ENCODE measurements at regions of chr7 and their contacts with region 1.

Region 1: GRCh38 chr7:33982425-33982786 is 77.1 kb downstream of the BMPER start:
- DNase-seq: no peak
- ATAC-seq: peak; percentile 48
- H3K4me3 Mint-ChIP-seq: no peak overlapping the region
- H3K27ac Mint-ChIP-seq: no peak overlapping the region
- H3K4me1 Mint-ChIP-seq: peaks cover 13% of the 10 kb centered on the region
- H3K27me3 Mint-ChIP-seq: no peaks in the 10 kb centered on the region
- CTCF ChIP-seq: peak; percentile 42

Region 2: GRCh38 chr7:33952824-33953223 is 29.6 kb before region 1 on chr7:
- CTCF ChIA-PET with region 1: interaction called, 10 read pairs
- POLR2A ChIA-PET with region 1: no interaction called
- DNase-seq: no peak
- ATAC-seq: no peak
- H3K4me3 Mint-ChIP-seq: no peak overlapping the region
- H3K27ac Mint-ChIP-seq: no peak overlapping the region
- H3K4me1 Mint-ChIP-seq: peaks cover 8% of the 10 kb centered on the region
- H3K27me3 Mint-ChIP-seq: no peaks in the 10 kb centered on the region
- CTCF ChIP-seq: no peak

Region 3: DNA sequence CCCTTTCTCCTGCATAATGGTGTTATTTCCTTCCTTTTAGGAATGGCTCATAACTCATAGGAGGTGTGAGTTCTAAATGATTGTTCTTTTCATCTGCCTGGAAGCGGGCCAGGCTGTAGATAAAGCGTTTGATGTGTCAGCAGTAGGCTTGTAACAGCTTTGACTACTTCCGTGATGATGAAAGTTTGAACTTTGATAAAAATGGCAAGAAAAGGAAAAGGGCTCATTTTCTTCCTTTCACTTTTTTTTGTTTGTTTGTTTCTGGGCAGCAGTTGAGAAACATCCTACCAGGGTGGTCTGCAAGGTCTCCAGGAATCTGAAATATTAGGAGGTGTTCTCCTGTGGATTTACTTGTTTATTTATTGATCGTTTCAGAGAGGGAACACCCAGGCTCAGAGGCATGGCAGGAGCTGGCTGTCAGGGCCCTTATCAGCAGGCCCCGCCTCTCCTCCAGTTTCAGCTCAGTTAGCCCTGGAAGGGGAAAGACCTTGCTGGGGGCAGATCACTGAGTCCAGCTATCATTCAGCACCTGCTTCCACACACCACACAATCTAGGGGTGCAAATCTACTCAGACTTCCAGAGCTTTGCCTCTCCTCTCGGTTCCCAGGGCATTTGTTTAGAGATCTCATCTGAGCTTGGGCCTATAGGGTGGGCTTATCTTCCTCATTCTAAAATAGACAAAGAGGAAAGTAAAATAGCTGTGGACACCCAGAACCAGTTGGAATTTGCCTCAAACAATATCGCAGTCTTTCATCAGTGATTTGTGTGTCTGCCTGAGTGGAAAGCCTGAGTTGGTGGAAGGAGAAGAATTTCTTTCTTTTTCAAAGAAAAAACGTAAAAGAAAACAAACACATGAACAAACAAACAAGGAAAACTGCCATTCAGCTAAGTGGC is 53.9 kb after region 1 on chr7:
- CTCF ChIA-PET with region 1: interaction called, 10 read pairs
- POLR2A ChIA-PET with region 1: no interaction called
- DNase-seq: peak; percentile 23
- ATAC-seq: peak; percentile 84
- H3K4me3 Mint-ChIP-seq: no peak overlapping the region
- H3K27ac Mint-ChIP-seq: 0 out of 2 replicates have a peak overlapping the region, but pooled peaks have one; percentile 18
- H3K4me1 Mint-ChIP-seq: peaks cover 25% of the 10 kb centered on the region
- H3K27me3 Mint-ChIP-seq: no peaks in the 10 kb centered on the region
- CTCF ChIP-seq: no peak

Region 4: GRCh38 chr7:34066968-34067367 is 84.6 kb after region 1 on chr7:
- CTCF ChIA-PET with region 1: interaction called, 10 read pairs
- POLR2A ChIA-PET with region 1: no interaction called
- DNase-seq: no peak
- ATAC-seq: peak; percentile 75
- H3K4me3 Mint-ChIP-seq: no peak overlapping the region
- H3K27ac Mint-ChIP-seq: peak overlapping the region; percentile 57; the same call in 1 of the 2 replicates
- H3K4me1 Mint-ChIP-seq: peaks cover 55% of the 10 kb centered on the region
- H3K27me3 Mint-ChIP-seq: no peaks in the 10 kb centered on the region
- CTCF ChIP-seq: no peak

Region 5: DNA sequence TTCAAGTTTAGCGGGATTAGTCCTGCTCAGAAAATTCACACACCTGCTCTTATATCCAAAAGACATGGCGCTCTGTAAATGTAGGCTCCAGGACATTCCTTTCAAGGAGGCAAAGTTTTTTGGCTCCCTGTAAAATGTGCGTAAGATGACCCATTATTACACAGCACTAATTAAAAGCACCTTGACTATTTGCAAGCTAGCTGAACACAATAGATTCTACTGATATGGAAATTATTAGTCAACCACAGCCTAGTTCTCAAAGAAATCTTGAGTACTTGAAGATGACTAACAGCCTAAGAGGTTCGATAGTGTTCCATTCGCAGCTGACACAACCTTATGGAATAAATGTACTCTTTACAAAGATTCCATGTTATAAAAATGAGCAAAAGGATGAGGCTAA is 98.1 kb after region 1 on chr7:
- CTCF ChIA-PET with region 1: interaction called, 231 read pairs
- POLR2A ChIA-PET with region 1: no interaction called
- DNase-seq: no peak
- ATAC-seq: no peak
- H3K4me3 Mint-ChIP-seq: no peak overlapping the region
- H3K27ac Mint-ChIP-seq: no peak overlapping the region
- H3K4me1 Mint-ChIP-seq: peaks cover 19% of the 10 kb centered on the region
- H3K27me3 Mint-ChIP-seq: no peaks in the 10 kb centered on the region
- CTCF ChIP-seq: no peak

Region 6: DNA sequence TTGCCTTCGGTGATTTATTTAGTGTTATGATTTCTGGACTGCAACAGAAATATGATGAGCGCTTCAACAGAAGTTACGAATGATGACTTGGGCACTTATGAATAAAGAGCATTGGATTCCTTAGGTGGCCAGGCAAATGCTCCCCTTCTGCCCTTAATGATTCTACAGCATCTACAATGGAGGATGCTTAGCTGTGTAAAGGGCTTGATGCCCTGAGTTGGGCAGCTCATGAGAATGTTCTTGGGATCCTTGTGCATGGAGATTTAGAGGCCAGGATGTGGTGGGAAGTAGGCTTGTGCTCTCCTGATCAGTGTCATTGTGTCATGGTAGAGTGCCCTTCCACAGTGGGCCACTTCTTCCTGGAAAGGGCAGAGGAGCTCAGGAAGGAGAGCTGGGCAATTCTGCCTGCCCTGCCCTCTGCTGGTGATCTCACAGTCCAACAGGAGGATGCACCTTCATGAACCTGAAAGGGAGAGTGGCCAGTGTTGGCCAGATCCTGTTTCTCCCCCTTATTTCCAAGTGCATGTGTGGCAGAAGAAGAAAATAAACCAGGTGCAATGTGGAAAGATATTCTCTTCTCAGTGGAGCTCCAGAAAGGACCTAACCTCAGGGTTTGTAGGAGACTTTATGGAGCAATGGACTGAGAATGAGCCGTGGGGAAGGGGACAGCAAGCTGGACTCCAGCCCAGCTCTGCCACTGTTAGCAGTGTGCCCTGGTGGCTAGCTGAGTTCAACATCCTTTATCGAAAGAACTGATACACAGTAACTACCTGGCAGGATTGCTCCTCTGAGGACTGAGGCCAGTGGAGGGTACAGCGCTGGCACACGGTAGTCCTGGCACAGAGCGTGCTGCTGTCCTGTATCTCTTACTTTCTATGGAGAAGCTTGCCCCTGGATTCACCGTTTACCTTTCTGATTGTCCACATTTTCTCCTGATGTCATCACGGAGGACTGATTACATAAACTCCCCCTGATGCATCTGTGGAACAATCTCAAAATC is 105.8 kb after region 1 on chr7:
- CTCF ChIA-PET with region 1: interaction called, 231 read pairs
- POLR2A ChIA-PET with region 1: no interaction called
- DNase-seq: peak; percentile 73
- ATAC-seq: peak; percentile 98
- H3K4me3 Mint-ChIP-seq: no peak overlapping the region
- H3K27ac Mint-ChIP-seq: no peak overlapping the region
- H3K4me1 Mint-ChIP-seq: no peaks in the 10 kb centered on the region
- H3K27me3 Mint-ChIP-seq: no peaks in the 10 kb centered on the region
- CTCF ChIP-seq: peak; percentile 79

Region 7: GRCh38 chr7:34133983-34134782 is 151.8 kb after region 1 on chr7:
- CTCF ChIA-PET with region 1: interaction called, 11 read pairs
- POLR2A ChIA-PET with region 1: no interaction called
- DNase-seq: peak; percentile 89
- ATAC-seq: peak; percentile 92
- H3K4me3 Mint-ChIP-seq: no peak overlapping the region
- H3K27ac Mint-ChIP-seq: 0 out of 2 replicates have a peak overlapping the region, but pooled peaks have one; percentile 13
- H3K4me1 Mint-ChIP-seq: peaks cover 12% of the 10 kb centered on the region
- H3K27me3 Mint-ChIP-seq: no peaks in the 10 kb centered on the region
- CTCF ChIP-seq: peak; percentile 67